HepG2 (cell line): ENCODE measurements at regions of chr16 and their contacts with region 1.

Region 1: GRCh38 chr16:57372372-57373116 is at the start of gene CX3CL1:
- DNase-seq: peak; percentile 99
- ATAC-seq: peak; percentile 83
- H3K4me3 ChIP-seq: peak within 1 kb of the TSS; percentile 81 to 95 (median 84)
- H3K27ac ChIP-seq: peak within 1 kb of the TSS; percentile 99
- H3K4me1 ChIP-seq: peaks cover 62% of the 10 kb centered on the region
- H3K27me3 ChIP-seq: no peaks in the 10 kb centered on the region; a peak in 1 of 5 replicates
- CTCF ChIP-seq: peak; percentile 59
- EP300 ChIP-seq: peak; percentile 57 to 98; a peak in 2 of 4 replicates
- POLR2A ChIP-seq: peak; percentile 96 to 98
- RAD21 ChIP-seq: peak; percentile 65
- total RNA-seq, gene CX3CL1: 23.4 and 57.3 TPM in 2 replicates

Region 2: DNA sequence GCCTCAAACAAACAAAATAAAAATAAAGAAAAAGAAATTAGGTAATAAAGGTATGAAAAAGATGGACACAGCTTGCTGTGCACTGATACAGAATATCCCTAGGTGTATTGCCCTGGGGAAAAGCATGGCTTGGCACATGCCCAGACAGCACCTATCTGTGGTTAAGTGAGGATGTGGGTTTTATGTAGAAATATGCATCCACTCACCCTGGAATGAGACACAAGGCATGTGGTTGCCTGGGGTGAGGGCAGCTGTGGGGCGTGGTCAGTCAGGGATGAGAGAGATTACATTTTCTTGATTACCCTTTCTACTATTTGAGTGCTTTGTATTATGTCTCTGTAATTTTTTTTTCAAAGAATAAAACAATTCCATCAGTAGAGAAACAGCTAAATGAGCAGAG is 95.0 kb before region 1 on chr16:
- CTCF ChIA-PET with region 1: no interaction called
- POLR2A ChIA-PET with region 1: interaction called, 17 read pairs
- in situ Hi-C with region 1: no loop called
- intact Hi-C with region 1: no loop called
- DNase-seq: no peak
- ATAC-seq: no peak
- H3K4me3 ChIP-seq: no peak overlapping the region
- H3K27ac ChIP-seq: no peak overlapping the region
- H3K4me1 ChIP-seq: peaks cover 100% of the 10 kb centered on the region
- H3K27me3 ChIP-seq: no peaks in the 10 kb centered on the region
- CTCF ChIP-seq: no peak
- EP300 ChIP-seq: no peak
- POLR2A ChIP-seq: no peak
- RAD21 ChIP-seq: no peak

Region 3: GRCh38 chr16:57310801-57311200 is 61.7 kb before region 1 on chr16:
- CTCF ChIA-PET with region 1: no interaction called
- POLR2A ChIA-PET with region 1: interaction called, 303 read pairs
- in situ Hi-C with region 1: no loop called
- intact Hi-C with region 1: no loop called
- DNase-seq: no peak
- ATAC-seq: peak; percentile 34
- H3K4me3 ChIP-seq: no peak overlapping the region
- H3K27ac ChIP-seq: no peak overlapping the region
- H3K4me1 ChIP-seq: peaks cover 33% of the 10 kb centered on the region
- H3K27me3 ChIP-seq: peaks cover 0 to 10% of the 10 kb centered on the region in 2 experiments; a peak in 2 of 5 replicates
- CTCF ChIP-seq: no peak
- EP300 ChIP-seq: no peak
- POLR2A ChIP-seq: no peak
- RAD21 ChIP-seq: no peak

Region 4: DNA sequence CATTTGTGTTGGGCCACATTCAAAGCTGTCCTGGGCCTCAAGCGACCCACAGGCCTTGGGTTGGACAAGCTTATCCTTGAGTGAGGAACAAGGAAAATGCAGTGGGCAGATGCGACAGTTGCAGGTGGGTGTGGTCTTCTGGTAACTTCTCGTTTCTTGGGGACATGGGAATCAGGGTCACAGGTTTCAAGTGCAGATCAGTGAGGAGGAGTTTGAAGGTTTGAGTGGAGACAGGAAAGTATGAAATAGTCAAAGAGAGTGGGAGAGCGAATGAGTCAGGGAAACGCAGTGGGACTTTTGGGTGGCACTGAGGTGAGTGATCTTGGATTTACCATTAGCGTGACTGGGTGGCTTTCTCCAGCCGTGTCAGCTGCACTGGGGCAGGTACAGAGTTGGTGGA is 29.3 kb before region 1 on chr16:
- CTCF ChIA-PET with region 1: no interaction called
- POLR2A ChIA-PET with region 1: interaction called, 14 read pairs
- in situ Hi-C with region 1: no loop called
- intact Hi-C with region 1: no loop called
- DNase-seq: no peak
- ATAC-seq: no peak
- H3K4me3 ChIP-seq: no peak overlapping the region
- H3K27ac ChIP-seq: no peak overlapping the region
- H3K4me1 ChIP-seq: peaks cover 40% of the 10 kb centered on the region
- H3K27me3 ChIP-seq: peaks cover 2 to 18% of the 10 kb centered on the region in 2 experiments; a peak in 3 of 5 replicates
- CTCF ChIP-seq: no peak
- EP300 ChIP-seq: no peak
- POLR2A ChIP-seq: no peak
- RAD21 ChIP-seq: no peak

Region 5: GRCh38 chr16:57383276-57384247 is 11.0 kb after region 1 on chr16:
- CTCF ChIA-PET with region 1: no interaction called
- POLR2A ChIA-PET with region 1: interaction called, 37 read pairs
- in situ Hi-C with region 1: no loop called
- intact Hi-C with region 1: no loop called
- DNase-seq: peak; percentile 44
- ATAC-seq: peak; percentile 45
- H3K4me3 ChIP-seq: no peak overlapping the region
- H3K27ac ChIP-seq: peak overlapping the region; percentile 3
- H3K4me1 ChIP-seq: peaks cover 61% of the 10 kb centered on the region
- H3K27me3 ChIP-seq: no peaks in the 10 kb centered on the region
- CTCF ChIP-seq: no peak
- EP300 ChIP-seq: peak in 1 of 2 experiments; percentile 20; a peak in 1 of 4 replicates
- POLR2A ChIP-seq: peak; percentile 34 to 45; a peak in 3 of 4 replicates
- RAD21 ChIP-seq: 0 out of 2 replicates have a peak, but pooled peaks have one; percentile 10

Region 6: GRCh38 chr16:57413301-57413730 is 40.8 kb after region 1 on chr16:
- CTCF ChIA-PET with region 1: interaction called, 7 read pairs
- POLR2A ChIA-PET with region 1: interaction called, 39 read pairs
- in situ Hi-C with region 1: no loop called
- intact Hi-C with region 1: loop called (anchors 2 kb)
- DNase-seq: no peak
- ATAC-seq: no peak
- H3K4me3 ChIP-seq: no peak overlapping the region
- H3K27ac ChIP-seq: no peak overlapping the region
- H3K4me1 ChIP-seq: peaks cover 46% of the 10 kb centered on the region
- H3K27me3 ChIP-seq: peaks cover 10 to 55% of the 10 kb centered on the region in 2 experiments; a peak in 4 of 5 replicates
- CTCF ChIP-seq: no peak
- EP300 ChIP-seq: no peak
- POLR2A ChIP-seq: no peak
- RAD21 ChIP-seq: no peak

Region 7: DNA sequence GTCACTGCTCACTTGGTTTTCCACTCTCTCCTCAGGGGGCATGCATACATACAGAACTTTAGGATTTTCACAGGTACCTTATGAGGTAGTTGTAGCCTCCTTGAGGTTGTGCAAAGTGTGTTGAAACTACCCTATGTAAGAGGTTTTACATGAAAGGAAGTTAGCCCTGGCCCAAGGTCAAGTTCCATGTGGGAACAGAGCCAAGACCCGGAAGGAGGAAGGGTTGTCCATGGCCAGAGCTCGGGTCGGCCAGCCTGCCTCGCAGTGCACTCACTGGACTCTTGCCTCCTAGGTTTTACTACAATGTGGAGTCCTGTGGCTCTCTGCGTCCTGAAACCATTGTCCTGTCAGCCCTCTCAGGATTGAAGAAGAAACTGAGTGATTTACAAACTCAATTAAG is 98.1 kb after region 1 on chr16:
- CTCF ChIA-PET with region 1: no interaction called
- POLR2A ChIA-PET with region 1: interaction called, 12 read pairs
- in situ Hi-C with region 1: no loop called
- intact Hi-C with region 1: no loop called
- DNase-seq: no peak
- ATAC-seq: no peak
- H3K4me3 ChIP-seq: no peak overlapping the region
- H3K27ac ChIP-seq: peak overlapping the region; percentile 82
- H3K4me1 ChIP-seq: peaks cover 54% of the 10 kb centered on the region
- H3K27me3 ChIP-seq: no peaks in the 10 kb centered on the region
- CTCF ChIP-seq: no peak
- EP300 ChIP-seq: no peak
- POLR2A ChIP-seq: no peak
- RAD21 ChIP-seq: no peak